SK-N-SH (cell line): ENCODE measurements at regions of chr9 and their contacts with region 1.

Region 1: DNA sequence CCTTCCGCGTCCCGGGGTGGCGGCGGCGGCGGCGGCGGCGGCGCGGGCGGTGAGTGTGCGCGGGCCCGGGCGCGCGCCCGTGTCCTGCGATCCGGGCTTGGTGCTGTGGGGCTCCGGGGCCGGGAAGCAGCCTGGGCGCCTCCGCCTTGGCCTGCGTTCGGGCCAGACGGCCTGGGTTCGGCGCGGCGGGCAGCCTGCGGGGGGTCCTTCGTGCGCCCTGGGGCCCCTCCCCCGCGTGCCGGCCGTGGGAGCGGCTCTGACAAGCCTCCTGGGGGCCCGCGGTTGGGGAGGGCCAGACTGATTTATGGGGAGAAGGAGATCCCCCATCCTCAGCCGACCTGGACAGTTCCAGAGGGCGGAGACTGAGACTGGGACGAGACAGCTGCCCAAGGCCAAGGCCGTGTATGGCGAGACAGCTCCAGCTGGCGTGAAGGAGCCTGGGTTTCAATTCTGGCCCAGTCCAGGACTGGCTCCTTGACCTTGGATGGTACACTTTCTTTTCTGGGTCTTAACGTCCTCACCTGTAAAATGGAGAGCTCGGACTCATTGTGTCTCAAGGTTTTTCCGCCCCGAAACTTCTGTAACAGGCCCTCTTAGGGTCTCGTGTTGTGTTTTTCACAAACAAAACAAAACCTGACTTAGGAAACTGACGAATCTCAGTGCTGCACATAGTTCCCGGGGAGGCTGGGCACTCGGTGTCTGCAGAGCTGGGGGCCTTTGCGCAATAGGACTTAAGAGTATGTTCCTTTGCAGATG is 603 bp downstream of the TMEM268 start:
- DNase-seq: no peak
- H3K4me3 ChIP-seq: peak overlapping the region; percentile 61 to 86
- H3K27ac ChIP-seq: peak overlapping the region; percentile 54 to 69
- H3K4me1 ChIP-seq: peaks cover 4 to 15% of the 10 kb centered on the region in 2 experiments; a peak in 1 of 4 replicates
- H3K27me3 ChIP-seq: no peaks in the 10 kb centered on the region
- CTCF ChIP-seq: no peak
- EP300 ChIP-seq: no peak
- RAD21 ChIP-seq: no peak

Region 2: GRCh38 chr9:114559830-114560513 is 51.7 kb before region 1 on chr9:
- CTCF ChIA-PET with region 1: no interaction called
- POLR2A ChIA-PET with region 1: no interaction called
- DNase-seq: no peak
- H3K4me3 ChIP-seq: no peak overlapping the region
- H3K27ac ChIP-seq: no peak overlapping the region
- H3K4me1 ChIP-seq: no peaks in the 10 kb centered on the region
- H3K27me3 ChIP-seq: peaks cover 6% of the 10 kb centered on the region; the same call in 1 of the 2 replicates
- CTCF ChIP-seq: no peak
- EP300 ChIP-seq: no peak
- RAD21 ChIP-seq: no peak

Region 3: GRCh38 chr9:114587385-114588202 is 24.1 kb before region 1 on chr9 and contains the start of gene ATP6V1G1:
- CTCF ChIA-PET with region 1: no interaction called
- POLR2A ChIA-PET with region 1: interaction called, 18 read pairs
- DNase-seq: peak; percentile 95
- H3K4me3 ChIP-seq: peak within 1 kb of the TSS; percentile 85 to 91
- H3K27ac ChIP-seq: peak within 1 kb of the TSS; percentile 77 to 84
- H3K4me1 ChIP-seq: peaks cover 9 to 12% of the 10 kb centered on the region in 2 experiments; a peak in 2 of 4 replicates
- H3K27me3 ChIP-seq: no peaks in the 10 kb centered on the region
- CTCF ChIP-seq: no peak; the same call in 1 of the 2 replicates
- EP300 ChIP-seq: no peak
- RAD21 ChIP-seq: no peak
- polyA plus RNA-seq, gene ATP6V1G1: 119 and 143 TPM in 2 replicates